Ascending aorta (tissue), 2 donors: ENCODE measurements at regions of chr9 and their contacts with region 1.

Region 1: DNA sequence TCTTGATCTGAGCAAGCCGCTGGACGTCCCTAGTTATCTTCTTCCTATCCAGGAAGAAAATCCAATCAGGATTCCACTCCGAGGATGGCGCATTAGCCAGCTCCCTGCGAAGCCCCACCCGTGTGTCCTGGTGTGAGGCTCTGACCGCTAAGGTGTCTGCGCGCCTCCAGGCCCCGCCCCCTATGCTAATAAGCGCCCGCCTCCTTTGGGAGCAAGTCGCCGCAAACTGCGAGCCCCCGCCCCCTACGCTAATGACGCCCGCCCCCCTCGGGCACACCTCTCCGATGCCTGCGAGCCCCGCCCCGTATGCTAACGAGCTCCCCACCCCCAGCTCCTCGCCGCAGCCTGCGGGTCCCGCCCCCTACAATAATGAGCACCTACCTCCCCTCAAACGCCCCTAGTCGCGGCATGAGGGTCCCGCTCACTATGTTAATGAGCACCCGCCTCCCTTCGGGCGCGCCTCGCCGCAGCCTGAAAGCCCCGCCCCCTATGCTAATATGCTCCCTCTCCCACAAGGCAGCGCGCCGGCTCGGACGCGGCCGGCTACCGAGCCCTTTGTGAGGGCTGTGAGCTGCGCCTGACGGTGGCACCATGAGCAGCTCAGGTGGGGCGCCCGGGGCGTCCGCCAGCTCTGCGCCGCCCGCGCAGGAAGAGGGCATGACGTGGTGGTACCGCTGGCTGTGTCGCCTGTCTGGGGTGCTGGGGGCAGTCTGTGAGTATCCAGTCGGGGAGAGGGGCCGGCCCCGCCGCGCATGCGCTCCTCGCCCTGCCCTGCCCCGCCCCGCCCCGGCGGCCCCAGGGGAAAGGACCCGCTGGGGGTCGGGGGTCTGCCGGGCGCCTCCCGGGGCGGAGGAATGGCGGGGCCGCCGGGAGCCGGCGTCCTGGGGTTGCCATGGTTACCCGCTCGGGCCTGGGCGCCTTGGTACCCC is at the start of gene CACFD1:
- DNase-seq: peak; percentile 88 to 98
- H3K4me3 ChIP-seq: peak within 1 kb of the TSS; percentile 63 to 90
- H3K27ac ChIP-seq: peak within 1 kb of the TSS; percentile 81 to 91
- H3K4me1 ChIP-seq: peaks cover 0 to 12% of the 10 kb centered on the region in 2 donors
- H3K27me3 ChIP-seq: no peaks in the 10 kb centered on the region
- CTCF ChIP-seq: no peak
- total RNA-seq, gene CACFD1: 24.8 TPM

Region 2: GRCh38 chr9:133347985-133348717 is 111.6 kb before region 1 on chr9 and contains the starts of genes MED22 and RPL7A:
- intact Hi-C with region 1: loop called (anchors 1 kb)
- DNase-seq: peak; percentile 86 to 97
- H3K4me3 ChIP-seq: peak within 1 kb of the TSS; percentile 69 to 80
- H3K27ac ChIP-seq: peak within 1 kb of the TSS; percentile 86 to 94
- H3K4me1 ChIP-seq: peaks cover 6 to 22% of the 10 kb centered on the region in 2 donors
- H3K27me3 ChIP-seq: no peaks in the 10 kb centered on the region
- CTCF ChIP-seq: peak in 1 of 3 experiments; percentile 9
- total RNA-seq, gene MED22: 52.2 TPM
- total RNA-seq, gene RPL7A: 1,203 TPM

Region 3: GRCh38 chr9:133417541-133418461 is 41.9 kb before region 1 on chr9 and contains the start of gene REXO4:
- intact Hi-C with region 1: loop called (anchors 2 kb)
- DNase-seq: peak; percentile 21 to 91
- H3K4me3 ChIP-seq: peak within 1 kb of the TSS; percentile 79 to 91
- H3K27ac ChIP-seq: peak within 1 kb of the TSS; percentile 78
- H3K4me1 ChIP-seq: peaks cover 0 to 21% of the 10 kb centered on the region in 2 donors
- H3K27me3 ChIP-seq: no peaks in the 10 kb centered on the region
- CTCF ChIP-seq: no peak
- total RNA-seq, gene REXO4: 29.4 TPM

Region 4: DNA sequence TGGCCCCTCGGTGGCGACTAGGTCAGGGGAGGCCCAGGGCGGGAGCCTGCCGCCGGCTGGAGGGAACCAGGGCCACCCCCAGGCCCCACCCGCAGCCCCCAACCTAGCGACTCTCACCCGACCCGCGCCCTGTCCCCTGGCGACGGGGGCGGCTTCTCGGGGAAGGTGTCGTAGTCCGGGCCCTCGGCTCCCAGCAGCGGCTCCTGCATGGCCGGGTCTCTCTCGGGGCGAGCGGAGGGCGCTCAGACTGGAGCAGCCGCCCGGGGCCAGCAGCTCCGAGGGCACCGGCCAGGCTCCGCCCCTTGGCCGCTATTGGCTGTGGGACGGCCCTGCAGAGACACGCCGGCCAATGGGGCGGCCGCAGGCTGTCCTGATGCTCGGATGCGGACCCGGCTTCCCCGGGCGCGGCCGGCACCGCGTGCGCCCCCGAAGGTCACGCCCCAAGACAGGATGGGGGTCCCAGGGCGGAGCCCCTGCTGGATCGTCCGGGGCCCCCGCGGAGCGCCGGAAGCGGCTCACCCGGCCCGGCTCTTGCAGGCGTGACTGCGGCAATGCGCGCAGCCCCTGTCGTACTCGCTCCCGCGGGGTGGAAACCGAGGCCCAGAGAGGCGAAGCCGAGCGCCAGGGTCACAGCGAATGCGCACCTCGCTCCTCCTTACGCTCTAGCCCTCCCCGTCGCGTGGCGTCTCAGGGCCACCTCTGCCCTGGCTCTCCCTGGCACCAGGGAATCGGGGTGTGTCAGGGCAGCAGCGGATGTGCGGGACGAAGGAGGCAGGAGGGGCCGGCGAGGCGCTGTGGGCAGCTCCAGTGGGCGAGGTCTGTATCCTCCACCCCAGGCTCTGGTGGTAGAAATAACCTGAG is 19.3 kb after region 1 on chr9 and contains the start of gene SLC2A6:
- intact Hi-C with region 1: loop called (anchors 1 kb)
- DNase-seq: peak; percentile 52 to 93
- H3K4me3 ChIP-seq: peak within 1 kb of the TSS; percentile 44 to 80
- H3K27ac ChIP-seq: peak within 1 kb of the TSS; percentile 50 to 64
- H3K4me1 ChIP-seq: peaks cover 6 to 17% of the 10 kb centered on the region in 2 donors
- H3K27me3 ChIP-seq: no peaks in the 10 kb centered on the region
- CTCF ChIP-seq: no peak
- total RNA-seq, gene SLC2A6: 8.7 TPM